Heart left ventricle (tissue), 16 donors: ENCODE measurements at regions of chrX and their contacts with region 1.

Region 1: DNA sequence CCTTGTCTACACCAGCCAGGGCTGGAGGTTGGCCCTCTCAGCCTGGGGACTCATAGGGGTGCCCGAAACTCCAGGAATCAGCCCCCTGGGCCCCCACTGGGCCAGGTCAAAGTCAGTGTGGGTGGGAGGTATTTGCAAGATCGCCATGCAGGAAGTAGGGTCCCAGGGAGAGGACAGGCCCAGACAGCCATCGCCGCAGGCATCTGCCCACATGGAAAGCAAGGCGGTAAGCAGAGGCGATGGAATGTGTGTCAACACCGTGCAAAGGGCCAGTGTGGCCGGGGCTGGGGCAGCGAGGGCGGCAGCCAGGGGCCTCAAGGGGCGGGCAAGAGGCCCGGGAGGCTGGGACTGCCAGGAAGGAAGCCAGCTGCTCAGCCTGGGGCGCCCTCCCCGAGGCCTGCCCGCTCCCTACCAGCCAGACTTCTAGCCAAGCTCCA is 19.3 kb upstream of the DUSP9 start:
- DNase-seq: peak in 1 of 5 donors; percentile 11
- ATAC-seq: no peak
- H3K4me3 ChIP-seq: no peak overlapping the region
- H3K27ac ChIP-seq: no peak overlapping the region
- H3K4me1 ChIP-seq: no peaks in the 10 kb centered on the region
- H3K27me3 ChIP-seq: peaks cover 0 to 13% (median 0%) of the 10 kb centered on the region in 9 donors
- CTCF ChIP-seq: no peak
- POLR2A ChIP-seq: no peak

Region 2: GRCh38 chrX:153560000-153560399 is 67.7 kb before region 1 on chrX:
- intact Hi-C with region 1: no loop called
- DNase-seq: peak in 1 of 5 donors; percentile 42
- ATAC-seq: peak in 3 of 4 donors; percentile 41 to 62 (median 45)
- H3K4me3 ChIP-seq: no peak overlapping the region
- H3K27ac ChIP-seq: no peak overlapping the region
- H3K4me1 ChIP-seq: no peaks in the 10 kb centered on the region
- H3K27me3 ChIP-seq: peaks cover 0 to 27% (median 0%) of the 10 kb centered on the region in 9 donors
- CTCF ChIP-seq: no peak
- POLR2A ChIP-seq: no peak

Region 3: DNA sequence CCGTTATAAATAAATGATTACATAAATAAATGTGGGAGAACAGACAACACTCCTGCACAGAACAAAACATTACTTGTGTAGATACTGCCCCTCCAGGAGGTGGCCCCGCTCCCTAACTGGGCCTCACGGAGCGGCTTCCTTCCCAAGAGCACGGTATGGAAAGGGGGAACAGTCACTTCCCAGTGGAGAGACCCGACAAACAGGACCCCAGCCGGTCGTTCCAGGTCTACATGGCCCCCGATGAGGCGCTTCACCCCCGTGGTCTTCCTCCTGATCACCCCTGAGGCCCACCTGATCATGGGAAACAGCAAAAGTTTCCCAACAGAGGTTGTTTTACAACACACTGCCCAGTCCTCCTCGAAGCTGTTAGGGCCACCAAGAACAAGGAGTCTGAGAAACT is 53.5 kb after region 1 on chrX:
- intact Hi-C with region 1: loop called in 1 of 10 experiments (anchors 1 kb)
- DNase-seq: peak in 1 of 5 donors; percentile 23
- ATAC-seq: no peak
- H3K4me3 ChIP-seq: no peak overlapping the region
- H3K27ac ChIP-seq: no peak overlapping the region
- H3K4me1 ChIP-seq: no peaks in the 10 kb centered on the region
- H3K27me3 ChIP-seq: peaks cover 0 to 22% (median 0%) of the 10 kb centered on the region in 9 donors
- CTCF ChIP-seq: no peak
- POLR2A ChIP-seq: no peak

Region 4: DNA sequence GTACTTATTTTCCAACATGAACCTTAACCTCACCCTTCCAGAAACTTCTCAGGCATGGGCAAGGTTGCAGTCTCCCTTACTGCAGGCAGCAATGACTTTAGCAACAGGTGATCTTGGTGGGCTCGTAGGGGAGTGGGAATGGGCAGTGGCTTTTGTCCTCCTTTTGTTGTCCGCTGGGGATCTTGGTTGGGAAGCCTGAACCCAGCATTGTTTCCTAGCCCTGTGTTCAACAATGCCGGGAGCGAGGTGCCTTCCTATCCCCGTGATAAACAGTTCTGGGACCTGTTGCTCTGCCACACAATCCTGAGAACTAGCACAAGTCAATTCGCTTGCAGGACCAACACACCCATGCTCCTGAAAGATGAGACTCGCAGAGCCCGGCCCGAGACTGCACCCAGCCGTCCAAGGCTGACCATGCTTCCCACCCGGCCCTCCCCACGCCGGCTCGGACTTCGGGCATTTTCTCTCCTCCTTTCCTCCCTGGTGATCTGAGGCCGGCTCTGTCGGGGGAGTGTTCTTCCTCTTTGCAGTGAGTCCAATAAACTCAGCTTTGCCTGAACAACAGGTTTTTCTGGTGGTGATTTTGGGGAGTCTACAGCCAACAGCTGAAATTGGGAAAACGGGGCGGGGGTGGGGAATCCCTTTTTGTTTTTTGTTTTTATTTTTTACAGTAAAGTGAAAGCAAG is 371.8 kb after region 1 on chrX:
- intact Hi-C with region 1: loop called in 1 of 10 experiments (anchors 10 kb)
- DNase-seq: no peak
- ATAC-seq: no peak
- H3K4me3 ChIP-seq: no peak overlapping the region
- H3K27ac ChIP-seq: no peak overlapping the region
- H3K4me1 ChIP-seq: peaks cover 0 to 22% (median 0%) of the 10 kb centered on the region in 12 donors
- H3K27me3 ChIP-seq: peaks cover 0 to 60% (median 0%) of the 10 kb centered on the region in 9 donors
- CTCF ChIP-seq: no peak
- POLR2A ChIP-seq: no peak